Activated CD8-positive, alpha-beta T cell treated with anti-CD3 and anti-CD28 coated beads, Interleukin-2, amount 10 ng/mL, durations not matched to agents 7 days and 5 days (primary cell): ENCODE measurements at regions of chr22 and their contacts with region 1.

Region 1: DNA sequence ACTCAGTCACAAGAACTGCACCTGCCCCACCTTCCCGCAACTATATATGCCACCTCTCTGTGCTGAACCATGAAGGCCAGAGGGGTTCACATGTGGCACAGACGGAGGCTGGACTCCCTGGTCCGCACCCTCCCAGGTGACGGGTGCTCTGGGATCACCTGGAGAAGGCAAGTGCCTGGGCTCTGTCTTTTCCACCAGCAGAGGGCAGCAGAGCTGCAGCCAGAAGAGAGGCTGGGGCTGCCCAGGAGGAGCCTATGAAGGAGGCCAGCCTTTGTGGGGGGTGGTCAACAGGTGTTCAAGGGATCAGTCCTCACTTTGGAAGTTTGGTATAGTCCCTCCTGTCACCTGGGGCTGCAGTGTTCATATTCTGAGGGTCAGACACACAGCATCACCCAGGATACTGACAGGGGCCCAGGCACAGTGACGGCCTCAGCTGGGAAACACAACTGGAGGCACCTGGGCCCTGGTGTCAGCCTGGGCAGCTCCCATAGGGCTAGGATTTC is 39.2 kb upstream of the IGLL5 start:
- DNase-seq: peak; percentile 77
- ATAC-seq: peak; percentile 95
- H3K4me3 Mint-ChIP-seq: no peak overlapping the region
- H3K27ac Mint-ChIP-seq: no peak overlapping the region
- H3K4me1 Mint-ChIP-seq: peaks cover 5% of the 10 kb centered on the region
- H3K27me3 Mint-ChIP-seq: peaks cover 24% of the 10 kb centered on the region

Region 2: DNA sequence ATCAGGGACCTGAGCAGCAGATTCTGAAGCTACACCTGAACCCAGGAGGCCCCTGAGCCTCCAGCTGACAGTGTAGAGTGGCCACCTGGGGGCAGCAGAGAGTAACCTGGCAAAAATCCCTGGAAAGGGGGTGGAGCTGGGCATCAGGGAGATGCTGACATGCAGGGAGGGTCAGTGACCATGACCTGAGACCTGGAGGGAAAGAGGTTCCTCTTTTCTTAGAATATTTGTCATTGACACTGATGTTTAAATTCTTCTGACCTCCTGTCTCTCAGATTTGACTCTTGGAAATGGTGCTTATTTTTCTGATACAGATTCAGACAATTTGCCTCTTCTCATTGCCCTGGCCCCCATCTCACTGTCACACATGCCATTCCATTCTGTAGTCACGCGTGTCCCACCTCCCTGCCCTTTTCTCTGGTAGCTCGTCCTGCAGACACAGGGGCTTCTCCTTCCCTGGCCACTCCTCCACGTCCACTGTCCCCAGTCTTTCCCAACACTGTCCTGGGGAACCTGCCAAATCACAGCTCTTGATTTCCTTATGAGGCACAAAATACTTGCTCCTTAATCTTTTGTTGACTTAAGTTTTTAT is 78.0 kb before region 1 on chr22:
- CTCF ChIA-PET with region 1: interaction called, 11 read pairs
- POLR2A ChIA-PET with region 1: no interaction called
- DNase-seq: peak; percentile 59
- ATAC-seq: peak; percentile 69
- H3K4me3 Mint-ChIP-seq: no peak overlapping the region
- H3K27ac Mint-ChIP-seq: no peak overlapping the region
- H3K4me1 Mint-ChIP-seq: no peaks in the 10 kb centered on the region
- H3K27me3 Mint-ChIP-seq: peaks cover 18% of the 10 kb centered on the region

Region 3: DNA sequence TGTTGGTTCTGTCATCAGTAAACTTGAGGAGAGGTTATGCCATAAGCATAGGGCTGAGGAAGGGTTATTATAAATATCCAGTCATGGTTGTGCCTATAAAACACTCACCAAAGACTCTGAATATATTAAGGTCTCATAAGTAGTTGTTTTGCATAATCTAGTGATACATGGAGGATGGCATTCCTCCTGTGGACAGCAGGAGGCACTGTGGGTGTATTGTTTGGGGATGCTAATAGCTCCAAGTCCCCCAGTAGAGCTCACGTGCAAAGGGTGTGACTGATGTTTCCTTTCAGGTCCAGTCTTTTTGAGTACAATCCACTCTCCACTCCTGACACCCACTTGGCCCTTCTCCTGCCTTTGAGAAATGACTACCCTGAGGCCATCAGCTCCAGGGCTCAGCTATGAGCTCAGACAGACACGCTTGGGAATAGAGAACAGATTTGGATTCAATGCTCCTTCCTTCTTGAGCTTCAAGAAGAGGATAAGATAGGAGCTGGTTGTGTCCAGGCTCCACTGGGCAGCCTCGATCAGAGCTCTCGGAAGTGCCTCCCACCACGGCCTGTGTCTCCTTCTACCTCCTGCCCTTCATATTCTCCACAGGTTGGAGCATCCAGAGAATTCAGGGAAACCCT is 46.0 kb before region 1 on chr22:
- CTCF ChIA-PET with region 1: interaction called, 26 read pairs
- POLR2A ChIA-PET with region 1: no interaction called
- DNase-seq: peak; percentile 71
- ATAC-seq: peak; percentile 73
- H3K4me3 Mint-ChIP-seq: no peak overlapping the region
- H3K27ac Mint-ChIP-seq: no peak overlapping the region
- H3K4me1 Mint-ChIP-seq: peaks cover 2% of the 10 kb centered on the region
- H3K27me3 Mint-ChIP-seq: peaks cover 22% of the 10 kb centered on the region

Region 4: DNA sequence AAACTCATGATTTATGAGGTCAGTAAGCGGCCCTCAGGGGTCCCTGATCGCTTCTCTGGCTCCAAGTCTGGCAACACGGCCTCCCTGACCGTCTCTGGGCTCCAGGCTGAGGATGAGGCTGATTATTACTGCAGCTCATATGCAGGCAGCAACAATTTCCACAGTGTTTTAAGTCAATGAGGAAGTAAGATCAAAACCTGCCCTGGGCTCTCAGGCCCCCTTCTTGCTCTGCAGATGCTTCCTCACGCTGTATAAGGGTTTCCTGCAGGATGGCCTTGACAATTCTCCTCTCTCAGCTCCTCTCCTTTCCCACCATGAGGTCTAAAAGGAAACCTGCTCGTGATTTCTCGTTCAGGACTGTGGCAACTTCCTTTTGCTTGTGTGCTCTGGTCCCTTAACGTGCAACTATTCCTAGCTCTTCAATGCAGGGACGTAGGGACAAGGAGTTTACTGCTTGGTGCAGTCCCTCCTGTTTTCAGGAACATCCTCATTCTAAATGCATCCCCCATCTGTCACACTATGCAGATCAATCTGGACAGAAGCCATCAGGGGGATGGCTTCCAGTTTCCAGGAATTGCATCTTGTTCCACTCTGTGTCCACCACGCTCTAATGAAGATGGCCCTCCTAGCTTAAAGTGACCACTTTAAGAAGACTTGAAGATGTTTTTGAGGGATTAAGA is 25.1 kb before region 1 on chr22:
- CTCF ChIA-PET with region 1: interaction called, 173 read pairs
- POLR2A ChIA-PET with region 1: interaction called, 4 read pairs
- DNase-seq: no peak
- ATAC-seq: no peak
- H3K4me3 Mint-ChIP-seq: no peak overlapping the region
- H3K27ac Mint-ChIP-seq: peak overlapping the region; percentile 75
- H3K4me1 Mint-ChIP-seq: peaks cover 71% of the 10 kb centered on the region
- H3K27me3 Mint-ChIP-seq: peaks cover 5% of the 10 kb centered on the region

Region 5: GRCh38 chr22:22865311-22866072 is 17.1 kb after region 1 on chr22:
- CTCF ChIA-PET with region 1: interaction called, 13 read pairs
- POLR2A ChIA-PET with region 1: no interaction called
- DNase-seq: peak; percentile 62
- ATAC-seq: peak; percentile 84
- H3K4me3 Mint-ChIP-seq: no peak overlapping the region
- H3K27ac Mint-ChIP-seq: peak overlapping the region; percentile 8
- H3K4me1 Mint-ChIP-seq: peaks cover 32% of the 10 kb centered on the region
- H3K27me3 Mint-ChIP-seq: peaks cover 45% of the 10 kb centered on the region

Region 6: GRCh38 chr22:22877523-22878210 is 29.3 kb after region 1 on chr22:
- CTCF ChIA-PET with region 1: interaction called, 77 read pairs
- POLR2A ChIA-PET with region 1: no interaction called
- DNase-seq: peak; percentile 82
- ATAC-seq: peak; percentile 60
- H3K4me3 Mint-ChIP-seq: no peak overlapping the region
- H3K27ac Mint-ChIP-seq: no peak overlapping the region
- H3K4me1 Mint-ChIP-seq: no peaks in the 10 kb centered on the region
- H3K27me3 Mint-ChIP-seq: peaks cover 21% of the 10 kb centered on the region

Region 7: GRCh38 chr22:22893077-22893805 is 44.8 kb after region 1 on chr22:
- CTCF ChIA-PET with region 1: no interaction called
- POLR2A ChIA-PET with region 1: no interaction called
- DNase-seq: no peak
- ATAC-seq: no peak
- H3K4me3 Mint-ChIP-seq: no peak overlapping the region
- H3K27ac Mint-ChIP-seq: no peak overlapping the region
- H3K4me1 Mint-ChIP-seq: peaks cover 4% of the 10 kb centered on the region
- H3K27me3 Mint-ChIP-seq: peaks cover 60% of the 10 kb centered on the region